Activated B cell treated with CpG ODN at 0.5 μM for 24 hours (primary cell): ENCODE measurements at regions of chr19 and their contacts with region 1.

Region 1: GRCh38 chr19:7535035-7535992 is at the start of gene PNPLA6:
- DNase-seq: peak; percentile 95
- ATAC-seq: peak; percentile 75
- H3K4me3 Mint-ChIP-seq: peak within 1 kb of the TSS; percentile 94
- H3K27ac Mint-ChIP-seq: peak within 1 kb of the TSS; percentile 91
- H3K4me1 Mint-ChIP-seq: peaks cover 32% of the 10 kb centered on the region
- H3K27me3 Mint-ChIP-seq: no peaks in the 10 kb centered on the region
- CTCF ChIP-seq: no peak
- total RNA-seq, gene PNPLA6: 110 and 116 TPM in 2 replicates

Region 2: DNA sequence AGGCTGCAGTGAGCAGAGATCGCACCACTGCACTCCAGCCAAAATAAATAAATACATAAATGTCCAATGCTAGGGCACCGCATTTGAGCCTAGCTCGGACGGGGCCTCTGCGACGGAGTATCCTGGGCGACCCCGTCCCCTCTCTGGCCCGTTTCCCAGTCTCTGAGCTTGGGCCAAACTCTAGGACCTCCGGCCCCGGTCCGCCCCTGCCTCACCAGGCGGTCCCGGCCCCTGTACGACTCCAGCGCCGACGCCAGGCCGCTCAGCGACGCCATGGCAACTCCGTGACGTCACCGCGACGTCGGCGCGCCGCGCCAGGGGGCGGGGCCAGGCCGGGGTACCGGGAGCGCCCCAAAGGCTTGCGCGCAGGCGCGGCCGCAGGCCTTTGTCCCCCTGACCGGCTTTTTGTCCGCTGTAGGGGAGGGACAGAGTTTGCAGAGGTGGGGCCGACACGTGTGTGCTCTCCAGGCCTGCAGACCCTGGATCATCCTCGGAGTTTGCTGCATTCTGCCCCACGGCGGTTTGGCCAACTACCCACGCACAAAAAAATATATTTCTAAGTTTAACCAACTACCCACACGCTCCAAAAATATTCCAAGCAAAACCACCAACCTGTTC is 46.5 kb before region 1 on chr19 and contains the start of gene PEX11G:
- CTCF ChIA-PET with region 1: no interaction called
- POLR2A ChIA-PET with region 1: interaction called, 4 read pairs
- intact Hi-C with region 1: loop called (anchors 1 kb)
- DNase-seq: peak; percentile 98
- ATAC-seq: peak; percentile 99
- H3K4me3 Mint-ChIP-seq: peak within 1 kb of the TSS; percentile 79
- H3K27ac Mint-ChIP-seq: peak within 1 kb of the TSS; percentile 69
- H3K4me1 Mint-ChIP-seq: peaks cover 10% of the 10 kb centered on the region
- H3K27me3 Mint-ChIP-seq: peaks cover 3% of the 10 kb centered on the region
- CTCF ChIP-seq: no peak
- total RNA-seq, gene PEX11G: 0.61 and 1.0 TPM in 2 replicates

Region 3: DNA sequence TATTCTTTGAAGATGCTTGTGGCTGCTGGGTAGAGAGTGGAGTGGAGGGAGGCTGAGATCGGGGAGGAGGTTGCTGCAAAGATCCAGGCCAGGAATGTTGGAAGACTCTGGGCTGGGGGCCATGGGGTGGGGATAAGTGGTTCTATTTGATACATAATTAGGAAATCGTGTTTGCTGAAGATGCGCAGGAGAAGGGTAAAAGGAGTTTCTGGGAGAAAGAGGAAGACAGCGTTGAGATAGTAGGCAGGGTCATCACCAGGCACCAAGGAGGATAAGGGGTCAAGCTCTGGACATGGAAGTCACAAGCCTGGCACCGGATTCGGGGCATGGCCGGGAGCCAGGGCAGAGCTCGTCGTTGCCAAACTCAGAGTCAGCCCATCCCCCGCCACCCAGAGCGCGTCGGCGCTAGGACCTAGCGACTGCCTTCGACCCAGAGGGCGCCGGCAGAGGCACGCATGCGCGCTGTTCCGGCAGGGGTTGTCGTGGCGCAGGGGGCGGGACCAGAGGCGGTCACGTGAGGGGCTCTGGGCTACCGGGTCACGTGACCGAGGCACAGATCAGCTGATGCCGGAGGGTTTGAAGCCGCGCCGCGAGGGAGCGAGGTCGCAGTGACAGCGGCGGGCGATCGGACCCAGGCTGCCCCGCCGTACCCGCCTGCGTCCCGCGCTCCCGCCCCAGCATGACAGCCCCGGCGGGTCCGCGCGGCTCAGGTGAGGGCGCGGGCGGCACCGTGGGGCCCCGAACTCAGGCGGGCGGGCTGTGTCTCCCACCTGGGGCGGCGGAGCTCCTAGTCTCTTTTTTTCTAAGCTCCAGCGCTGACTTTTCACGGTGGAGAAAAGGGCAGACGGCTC is 13.0 kb before region 1 on chr19 and contains the start of gene MCOLN1:
- CTCF ChIA-PET with region 1: no interaction called
- POLR2A ChIA-PET with region 1: interaction called, 37 read pairs
- intact Hi-C with region 1: loop called (anchors 1 kb)
- DNase-seq: peak; percentile 99
- ATAC-seq: peak; percentile 91
- H3K4me3 Mint-ChIP-seq: peak within 1 kb of the TSS; percentile 81
- H3K27ac Mint-ChIP-seq: peak within 1 kb of the TSS; percentile 74
- H3K4me1 Mint-ChIP-seq: peaks cover 17% of the 10 kb centered on the region
- H3K27me3 Mint-ChIP-seq: no peaks in the 10 kb centered on the region
- CTCF ChIP-seq: no peak
- total RNA-seq, gene MCOLN1: 13.4 and 13.7 TPM in 2 replicates

Region 4: GRCh38 chr19:7629347-7630054 is 94.2 kb after region 1 on chr19 and contains the starts of genes PET100 and XAB2:
- CTCF ChIA-PET with region 1: no interaction called
- POLR2A ChIA-PET with region 1: interaction called, 9 read pairs
- intact Hi-C with region 1: loop called (anchors 1 kb)
- DNase-seq: peak; percentile 88
- ATAC-seq: peak; percentile 98
- H3K4me3 Mint-ChIP-seq: peak within 1 kb of the TSS; percentile 98
- H3K27ac Mint-ChIP-seq: peak within 1 kb of the TSS; percentile 98
- H3K4me1 Mint-ChIP-seq: peaks cover 37% of the 10 kb centered on the region
- H3K27me3 Mint-ChIP-seq: no peaks in the 10 kb centered on the region
- CTCF ChIP-seq: no peak
- total RNA-seq, gene PET100: 109 and 123 TPM in 2 replicates
- total RNA-seq, gene XAB2: 47.4 and 51.8 TPM in 2 replicates